Right ventricle myocardium superior (tissue), 1 donor: ENCODE measurements at regions of chr13 and their contacts with region 1.

Region 1: GRCh38 chr13:45464687-45465453 is at the start of gene COG3:
- DNase-seq: peak; percentile 96
- ATAC-seq: peak; percentile 99
- total RNA-seq, gene COG3: 12.9 TPM

Region 2: GRCh38 chr13:45417790-45418534 is 46.9 kb before region 1 on chr13 and contains the start of gene SLC25A30:
- intact Hi-C with region 1: loop called (anchors 5 kb)
- DNase-seq: peak; percentile 97
- ATAC-seq: peak; percentile 97
- total RNA-seq, gene SLC25A30: 142 TPM

Region 3: DNA sequence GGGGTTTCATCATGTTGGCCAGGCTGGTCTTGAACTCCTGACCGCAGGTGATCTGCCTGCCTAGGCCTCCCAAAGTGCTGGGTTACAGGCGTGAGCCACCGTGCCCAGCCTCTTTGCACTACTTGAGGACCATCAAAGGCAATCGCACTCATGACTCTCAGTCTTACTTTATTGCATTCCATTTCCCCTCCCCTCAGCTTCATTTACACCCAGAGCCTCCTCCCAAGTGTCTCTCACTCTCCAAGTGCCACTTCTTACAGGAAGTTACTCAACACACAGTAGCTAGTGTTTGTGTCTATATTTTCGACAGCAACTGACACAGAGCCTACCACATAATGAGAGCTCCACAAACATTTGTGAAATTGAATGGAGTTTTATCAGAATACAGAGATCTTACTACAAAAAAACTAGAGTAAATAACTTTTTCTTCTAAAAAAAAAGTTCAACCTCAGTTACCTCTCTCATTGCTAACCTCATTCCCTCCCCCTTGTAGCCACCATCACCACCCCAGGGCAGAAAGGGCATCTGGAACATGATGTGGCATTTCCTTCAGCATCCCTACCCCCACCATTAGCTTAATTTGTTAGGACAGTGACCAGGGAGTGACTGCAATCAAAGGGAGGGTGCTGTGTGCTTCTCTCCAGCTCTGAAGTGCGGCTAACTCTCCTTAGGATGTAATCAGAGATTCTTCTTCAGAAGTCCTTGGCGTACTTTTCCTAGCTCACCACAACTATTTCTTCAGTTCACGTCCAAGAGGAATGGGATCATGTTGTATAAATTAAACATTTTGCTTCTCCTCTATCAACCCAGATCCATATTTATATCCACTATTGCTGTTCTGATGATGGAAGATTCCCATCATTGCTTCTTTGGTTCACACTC is 939.2 kb after region 1 on chr13:
- intact Hi-C with region 1: no loop called
- DNase-seq: no peak
- ATAC-seq: peak; percentile 84